ENCODE measurements at regions of chr11 and their contacts with region 1.

Region 1: GRCh38 chr11:123707606-123708205 is 33.8 kb downstream of the ZNF202 start:
- DNase-seq: peak; percentile 50 to 60
- ATAC-seq: peak; percentile 83 to 89
- H3K4me3 ChIP-seq: no peak overlapping the region
- H3K27ac ChIP-seq: no peak overlapping the region
- H3K4me1 ChIP-seq: no peaks in the 10 kb centered on the region
- CTCF ChIP-seq: peak; percentile 77
- EP300 ChIP-seq: no peak
- POLR2A ChIP-seq: no peak
- RAD21 ChIP-seq: peak; percentile 78 to 80

Region 2: GRCh38 chr11:123547180-123547579 is 160.5 kb before region 1 on chr11:
- CTCF ChIA-PET with region 1: no interaction called
- POLR2A ChIA-PET with region 1: no interaction called
- DNase-seq: no peak
- ATAC-seq: no peak
- H3K4me3 ChIP-seq: no peak overlapping the region
- H3K27ac ChIP-seq: no peak overlapping the region
- H3K4me1 ChIP-seq: peaks cover 59% of the 10 kb centered on the region
- CTCF ChIP-seq: no peak
- EP300 ChIP-seq: no peak
- POLR2A ChIP-seq: no peak
- RAD21 ChIP-seq: no peak

Region 3: DNA sequence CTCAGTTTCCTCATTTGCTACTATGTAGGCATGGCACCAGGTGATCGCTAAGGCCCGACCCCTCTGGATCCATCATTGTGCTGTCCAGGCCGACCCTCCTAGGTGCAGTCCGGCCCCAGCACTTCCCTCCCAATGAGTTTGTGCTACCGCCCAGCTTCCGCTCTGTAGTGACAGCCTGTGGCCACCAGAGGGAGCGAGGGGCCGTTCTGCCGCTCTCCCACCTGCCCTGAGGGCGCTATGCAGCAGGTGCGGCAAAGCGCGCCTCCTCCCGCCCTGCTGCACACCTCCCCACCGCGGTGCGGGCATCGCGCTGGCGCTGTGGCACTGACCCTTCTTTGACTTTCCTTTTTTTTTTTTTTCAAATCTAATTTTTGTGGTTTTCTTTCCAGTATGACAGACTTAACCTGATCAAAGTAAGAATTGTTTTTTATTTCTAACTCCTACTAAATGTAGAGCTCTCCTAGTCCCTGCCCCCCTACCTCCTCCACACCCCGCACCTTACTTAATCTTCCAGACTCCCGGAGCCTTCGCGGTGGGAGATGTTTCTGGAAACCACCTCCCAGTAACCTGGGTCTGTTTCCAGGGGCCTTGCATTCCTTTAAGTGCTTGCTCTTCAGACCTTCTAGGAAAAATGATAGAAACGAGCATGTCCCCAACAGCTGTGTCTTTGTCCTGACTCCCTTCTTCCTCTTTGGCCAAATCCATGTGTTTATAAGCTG is 127.0 kb before region 1 on chr11:
- CTCF ChIA-PET with region 1: interaction called, 23 read pairs
- POLR2A ChIA-PET with region 1: no interaction called
- DNase-seq: peak; percentile 55 to 65
- ATAC-seq: peak; percentile 64 to 82
- H3K4me3 ChIP-seq: no peak overlapping the region
- H3K27ac ChIP-seq: peak overlapping the region; percentile 60 to 75
- H3K4me1 ChIP-seq: peaks cover 63% of the 10 kb centered on the region
- CTCF ChIP-seq: peak; percentile 75
- EP300 ChIP-seq: no peak
- POLR2A ChIP-seq: no peak
- RAD21 ChIP-seq: peak; percentile 76 to 78

Region 4: DNA sequence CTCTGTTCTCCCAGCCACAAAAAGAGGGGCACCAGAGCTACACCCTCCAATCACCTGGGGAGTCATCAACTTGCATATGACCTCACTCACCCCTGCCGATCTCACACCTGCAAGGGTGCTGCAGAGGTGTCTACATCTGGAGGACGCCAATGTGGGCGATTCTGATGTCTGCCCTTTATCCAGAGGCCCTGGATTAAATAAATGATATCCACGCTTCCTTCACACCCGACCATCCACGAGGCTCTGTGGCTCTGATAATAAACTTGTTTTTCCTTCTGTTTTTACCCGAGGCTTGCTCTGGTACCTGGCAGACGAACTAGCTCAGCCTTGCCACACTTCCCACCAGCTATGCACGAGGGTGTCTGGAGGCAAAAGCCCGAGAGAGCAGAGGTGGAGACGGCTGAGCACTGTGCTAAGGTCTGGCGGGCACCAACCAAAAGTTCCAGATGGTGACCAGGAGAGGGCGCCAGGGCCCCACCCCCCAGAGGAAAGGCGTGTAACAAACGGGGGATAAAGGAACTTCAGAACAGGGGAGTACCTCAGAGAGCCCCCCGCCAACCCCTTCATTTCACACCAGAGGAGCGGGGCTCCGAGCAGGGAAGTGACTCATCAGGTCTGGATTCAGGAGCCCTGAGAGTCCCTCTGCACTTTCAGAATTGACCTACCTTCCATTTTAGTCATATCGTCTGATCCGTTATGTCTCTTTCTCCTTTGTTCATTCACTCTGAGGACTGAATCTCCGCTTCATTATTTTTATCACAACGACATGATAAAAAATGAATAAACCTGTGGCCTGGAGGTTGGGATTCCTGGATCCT is 66.8 kb before region 1 on chr11:
- CTCF ChIA-PET with region 1: interaction called, 189 read pairs
- POLR2A ChIA-PET with region 1: no interaction called
- DNase-seq: peak; percentile 35 to 43
- ATAC-seq: peak; percentile 84 to 97
- H3K4me3 ChIP-seq: no peak overlapping the region
- H3K27ac ChIP-seq: no peak overlapping the region
- H3K4me1 ChIP-seq: no peaks in the 10 kb centered on the region
- CTCF ChIP-seq: peak; percentile 71
- EP300 ChIP-seq: no peak
- POLR2A ChIP-seq: no peak
- RAD21 ChIP-seq: peak; percentile 79 to 83

Region 5: DNA sequence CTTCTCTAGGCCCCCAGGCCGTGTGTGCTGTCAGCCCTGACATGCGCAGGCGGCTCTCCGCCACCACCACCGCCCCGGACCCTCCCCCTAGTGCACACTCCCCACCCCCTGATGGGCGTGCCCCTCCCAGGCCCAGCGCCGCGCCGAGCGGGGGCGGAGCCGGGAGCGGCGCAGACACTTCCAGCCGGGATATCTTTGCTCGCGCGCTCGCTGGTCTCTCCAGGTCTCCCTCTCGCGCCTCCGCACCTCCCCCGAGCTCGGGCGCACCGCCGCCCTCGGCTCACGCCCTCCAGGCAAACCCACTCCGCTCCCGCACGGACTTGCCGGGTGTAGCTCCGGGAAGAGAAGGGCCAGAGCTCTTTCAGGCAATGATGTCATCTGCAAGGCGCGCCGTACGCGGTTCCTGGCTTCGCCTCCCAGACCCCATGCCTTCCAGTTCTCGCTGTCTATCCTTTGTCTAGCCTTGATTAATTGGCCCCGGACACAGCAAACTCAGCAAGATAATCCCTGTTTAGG is 53.1 kb before region 1 on chr11 and contains the start of gene SCN3B:
- CTCF ChIA-PET with region 1: interaction called, 44 read pairs
- POLR2A ChIA-PET with region 1: interaction called, 3 read pairs
- DNase-seq: peak; percentile 69 to 72
- ATAC-seq: peak; percentile 95 to 98
- H3K4me3 ChIP-seq: peak within 1 kb of the TSS; percentile 73
- H3K27ac ChIP-seq: peak within 1 kb of the TSS in 1 of 2 experiments; percentile 65; a peak in 3 of 6 replicates
- H3K4me1 ChIP-seq: peaks cover 3% of the 10 kb centered on the region; the same call in 1 of the 3 replicates
- CTCF ChIP-seq: no peak
- EP300 ChIP-seq: no peak
- POLR2A ChIP-seq: no peak
- RAD21 ChIP-seq: no peak
- polyA plus RNA-seq, gene SCN3B: 0.37 and 0.40 TPM in 2 replicates

Region 6: GRCh38 chr11:123678246-123678645 is 29.5 kb before region 1 on chr11:
- CTCF ChIA-PET with region 1: interaction called, 12 read pairs
- POLR2A ChIA-PET with region 1: no interaction called
- DNase-seq: no peak
- ATAC-seq: no peak
- H3K4me3 ChIP-seq: no peak overlapping the region
- H3K27ac ChIP-seq: no peak overlapping the region
- H3K4me1 ChIP-seq: no peaks in the 10 kb centered on the region
- CTCF ChIP-seq: no peak
- EP300 ChIP-seq: no peak
- POLR2A ChIP-seq: no peak
- RAD21 ChIP-seq: no peak

Region 7: GRCh38 chr11:123694551-123694950 is 13.2 kb before region 1 on chr11:
- CTCF ChIA-PET with region 1: interaction called, 14 read pairs
- POLR2A ChIA-PET with region 1: no interaction called
- DNase-seq: no peak
- ATAC-seq: no peak
- H3K4me3 ChIP-seq: no peak overlapping the region
- H3K27ac ChIP-seq: no peak overlapping the region
- H3K4me1 ChIP-seq: no peaks in the 10 kb centered on the region
- CTCF ChIP-seq: no peak
- EP300 ChIP-seq: no peak
- POLR2A ChIP-seq: no peak
- RAD21 ChIP-seq: no peak

Region 8: DNA sequence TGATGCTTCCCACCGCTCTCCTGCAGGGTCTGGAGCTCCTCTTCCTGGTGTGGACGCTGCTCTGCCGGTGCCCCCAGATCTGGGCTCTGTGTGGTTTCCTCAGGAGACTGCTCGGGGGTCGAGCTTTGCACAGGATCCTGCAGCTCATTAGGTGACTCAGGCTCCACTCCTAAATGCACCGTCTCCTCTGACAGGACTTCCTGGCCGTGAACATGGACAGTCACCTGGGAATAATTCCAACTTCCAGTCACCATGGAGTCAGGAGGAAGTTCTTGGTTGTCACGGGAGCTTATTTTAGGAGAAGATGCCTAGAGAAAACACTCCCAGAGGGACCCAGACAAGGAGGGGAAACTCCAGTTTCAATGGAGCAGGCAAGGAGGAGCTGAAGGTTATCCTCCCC is 21.9 kb after region 1 on chr11:
- CTCF ChIA-PET with region 1: interaction called, 14 read pairs
- POLR2A ChIA-PET with region 1: no interaction called
- DNase-seq: no peak
- ATAC-seq: no peak
- H3K4me3 ChIP-seq: no peak overlapping the region
- H3K27ac ChIP-seq: no peak overlapping the region
- H3K4me1 ChIP-seq: no peaks in the 10 kb centered on the region
- CTCF ChIP-seq: no peak
- EP300 ChIP-seq: no peak
- POLR2A ChIP-seq: no peak
- RAD21 ChIP-seq: no peak

Region 9: GRCh38 chr11:123841174-123841573 is 133.5 kb after region 1 on chr11:
- CTCF ChIA-PET with region 1: no interaction called
- POLR2A ChIA-PET with region 1: no interaction called
- DNase-seq: no peak
- ATAC-seq: no peak
- H3K4me3 ChIP-seq: no peak overlapping the region
- H3K27ac ChIP-seq: no peak overlapping the region
- H3K4me1 ChIP-seq: no peaks in the 10 kb centered on the region
- CTCF ChIP-seq: no peak
- EP300 ChIP-seq: no peak
- POLR2A ChIP-seq: no peak
- RAD21 ChIP-seq: no peak

Measured in A549 (cell line).